ENCODE measurements at regions of chr2 and their contacts with region 1.

Region 1: DNA sequence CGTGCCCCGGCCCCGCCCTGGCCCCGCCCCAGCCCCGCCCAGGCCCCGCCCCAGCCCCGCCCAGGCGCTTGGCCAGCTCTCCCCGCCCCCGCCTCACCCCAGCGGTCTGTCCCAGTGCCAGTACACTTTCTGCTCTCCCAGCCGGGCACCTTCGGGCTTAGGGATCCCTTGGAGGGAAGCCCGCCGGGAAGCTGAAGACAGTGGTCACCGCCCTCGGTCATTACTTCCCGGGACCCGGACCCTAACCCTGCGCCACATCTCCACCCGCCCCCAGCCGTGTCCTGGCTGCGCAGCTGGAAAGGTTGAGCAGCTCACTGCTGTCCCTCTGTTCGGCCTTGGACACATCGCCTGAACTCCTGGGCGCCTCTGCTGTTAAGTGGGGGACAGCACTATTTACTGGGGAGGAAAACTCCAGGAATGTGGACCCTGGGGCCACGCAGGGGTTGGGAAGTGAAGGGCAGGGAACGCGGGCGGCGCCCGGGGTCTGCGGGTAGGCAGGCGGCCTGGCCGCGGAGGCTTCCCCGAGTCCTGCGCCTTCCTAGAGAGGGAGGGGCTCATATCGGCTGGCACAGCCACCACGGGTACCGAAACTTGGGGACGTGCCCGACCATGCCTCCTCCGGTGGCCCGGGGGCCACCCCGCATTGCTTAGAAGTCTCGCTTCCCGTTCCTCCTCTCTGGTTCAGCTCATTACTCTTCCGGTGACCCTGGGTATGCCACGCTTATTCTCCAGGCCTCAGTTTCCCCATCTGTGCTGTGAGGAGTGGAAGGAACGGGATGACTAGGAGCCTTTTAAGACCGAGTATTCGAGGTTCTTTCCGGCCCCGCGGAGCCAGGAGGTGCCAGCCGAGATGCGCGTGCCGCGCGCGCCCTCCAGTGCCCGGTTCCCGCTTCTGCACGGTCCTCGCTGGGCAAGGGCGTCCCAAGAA is 121.0 kb downstream of the GYPC start:
- DNase-seq: peak; percentile 63 to 93 (median 83)
- ATAC-seq: peak; percentile 86
- H3K4me3 ChIP-seq: peak overlapping the region; percentile 69 to 91
- H3K4me3 Mint-ChIP-seq: peak overlapping the region; percentile 94
- H3K27ac ChIP-seq: peak overlapping the region; percentile 33 to 54
- H3K27ac Mint-ChIP-seq: peak overlapping the region; percentile 94
- H3K4me1 ChIP-seq: peaks cover 4% of the 10 kb centered on the region
- H3K4me1 Mint-ChIP-seq: peaks cover 16% of the 10 kb centered on the region
- H3K27me3 ChIP-seq: no peaks in the 10 kb centered on the region
- H3K27me3 Mint-ChIP-seq: peaks cover 9% of the 10 kb centered on the region
- CTCF ChIP-seq: peak; percentile 95

Region 2: DNA sequence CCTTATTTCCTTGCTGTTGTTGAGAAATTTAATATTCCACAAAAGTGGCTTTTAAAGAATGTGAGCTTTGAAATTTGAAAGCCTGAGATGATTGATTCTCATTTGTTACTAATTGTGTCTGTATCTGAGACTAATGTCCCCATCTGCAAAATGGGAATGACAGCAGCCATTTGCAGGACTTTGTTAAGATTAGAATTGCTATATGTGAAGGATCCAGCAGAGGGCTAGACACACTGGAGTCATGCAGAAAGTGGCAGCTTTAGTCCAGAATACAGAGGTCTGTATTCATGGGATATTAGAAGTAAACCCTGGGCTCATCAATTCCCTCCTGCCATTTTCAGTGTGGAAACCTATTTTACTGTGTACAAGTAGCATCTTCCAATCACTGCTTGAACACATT is 417.5 kb before region 1 on chr2:
- CTCF ChIA-PET with region 1: no interaction called
- POLR2A ChIA-PET with region 1: no interaction called
- intact Hi-C with region 1: loop called in 1 of 2 experiments (anchors 1 kb)
- DNase-seq: peak in 2 of 9 experiments; percentile 11 to 27
- ATAC-seq: peak; percentile 42
- H3K4me3 ChIP-seq: no peak overlapping the region
- H3K4me3 Mint-ChIP-seq: no peak overlapping the region
- H3K27ac ChIP-seq: no peak overlapping the region
- H3K27ac Mint-ChIP-seq: no peak overlapping the region
- H3K4me1 ChIP-seq: no peaks in the 10 kb centered on the region
- H3K4me1 Mint-ChIP-seq: no peaks in the 10 kb centered on the region
- H3K27me3 ChIP-seq: no peaks in the 10 kb centered on the region
- H3K27me3 Mint-ChIP-seq: peaks cover 14% of the 10 kb centered on the region
- CTCF ChIP-seq: no peak

Region 3: DNA sequence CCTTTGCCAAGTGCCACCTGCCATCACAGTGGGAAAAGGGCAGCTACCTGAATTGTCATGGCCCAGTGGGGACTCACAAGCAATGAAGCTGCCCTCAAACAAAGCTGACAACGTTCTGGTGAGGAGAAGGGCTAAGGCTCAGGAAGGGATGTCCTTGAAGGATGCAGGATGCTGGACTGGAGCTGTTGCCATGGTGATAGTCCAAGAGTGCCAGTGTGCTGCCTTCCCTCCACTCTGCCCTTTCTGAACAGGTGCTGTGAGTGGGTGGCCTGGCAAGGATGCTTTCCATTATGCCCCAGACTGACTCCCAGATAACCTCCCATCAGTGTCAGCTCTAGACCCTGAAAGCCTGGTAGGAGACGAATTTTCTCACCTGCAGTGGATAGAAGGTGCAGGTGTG is 258.8 kb before region 1 on chr2:
- CTCF ChIA-PET with region 1: interaction called, 10 read pairs
- POLR2A ChIA-PET with region 1: no interaction called
- intact Hi-C with region 1: no loop called
- DNase-seq: no peak
- ATAC-seq: no peak
- H3K4me3 ChIP-seq: no peak overlapping the region
- H3K4me3 Mint-ChIP-seq: no peak overlapping the region
- H3K27ac ChIP-seq: no peak overlapping the region
- H3K27ac Mint-ChIP-seq: no peak overlapping the region
- H3K4me1 ChIP-seq: no peaks in the 10 kb centered on the region
- H3K4me1 Mint-ChIP-seq: no peaks in the 10 kb centered on the region
- H3K27me3 ChIP-seq: no peaks in the 10 kb centered on the region
- H3K27me3 Mint-ChIP-seq: peaks cover 3% of the 10 kb centered on the region
- CTCF ChIP-seq: no peak

Region 4: DNA sequence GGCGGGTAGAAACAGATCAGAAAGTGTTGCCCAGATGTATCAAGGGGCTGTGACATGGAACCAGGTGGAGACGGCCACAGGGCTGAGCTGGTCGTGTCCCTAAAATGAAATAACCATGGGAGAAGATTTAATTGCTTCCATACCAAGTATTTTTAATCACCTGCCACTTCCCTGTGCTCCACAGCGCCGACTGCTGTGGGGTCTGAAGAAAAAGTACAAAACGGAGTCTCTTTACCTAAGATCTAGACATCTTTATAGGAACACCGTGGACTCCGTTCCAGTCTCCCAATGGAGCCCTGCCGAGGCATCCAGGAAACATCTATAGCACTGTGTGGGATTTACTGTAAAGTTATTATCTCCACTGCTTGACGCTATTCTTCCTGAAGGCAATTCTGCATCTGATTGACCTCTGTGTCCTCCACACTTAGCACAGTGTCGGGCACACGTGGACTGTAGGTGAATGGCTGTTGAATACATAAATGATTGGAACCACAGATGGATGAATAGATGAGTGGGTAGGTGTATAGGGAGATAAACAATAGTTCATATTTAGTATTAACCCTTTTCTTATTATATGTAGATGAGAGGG is 142.6 kb before region 1 on chr2:
- CTCF ChIA-PET with region 1: interaction called, 15 read pairs
- POLR2A ChIA-PET with region 1: no interaction called
- intact Hi-C with region 1: loop called in 1 of 2 experiments (anchors 1 kb)
- DNase-seq: peak in 7 of 9 experiments; percentile 14 to 67 (median 41)
- ATAC-seq: peak; percentile 48
- H3K4me3 ChIP-seq: no peak overlapping the region
- H3K4me3 Mint-ChIP-seq: no peak overlapping the region
- H3K27ac ChIP-seq: no peak overlapping the region
- H3K27ac Mint-ChIP-seq: no peak overlapping the region
- H3K4me1 ChIP-seq: no peaks in the 10 kb centered on the region
- H3K4me1 Mint-ChIP-seq: peaks cover 5% of the 10 kb centered on the region
- H3K27me3 ChIP-seq: no peaks in the 10 kb centered on the region
- H3K27me3 Mint-ChIP-seq: no peaks in the 10 kb centered on the region
- CTCF ChIP-seq: peak; percentile 51

Region 5: DNA sequence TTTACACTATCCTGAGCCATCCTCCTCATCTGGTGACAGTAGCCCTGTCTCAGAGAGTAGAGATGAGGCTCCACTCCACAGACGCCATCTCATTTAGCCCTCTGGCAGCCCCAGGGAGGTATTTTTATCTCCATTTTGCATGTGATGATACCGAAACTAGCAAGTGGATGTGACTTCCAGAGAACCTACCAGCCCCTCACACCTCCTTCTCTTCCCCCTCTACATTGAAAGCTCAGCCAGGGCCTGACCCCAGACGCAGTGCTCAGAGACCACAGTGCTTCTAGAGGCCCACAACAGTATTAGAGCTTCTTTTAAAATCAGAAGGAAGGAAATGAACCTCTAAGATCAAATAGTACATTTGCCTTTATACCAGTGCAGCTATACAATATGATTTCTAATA is 112.7 kb before region 1 on chr2:
- CTCF ChIA-PET with region 1: interaction called, 18 read pairs
- POLR2A ChIA-PET with region 1: interaction called, 4 read pairs
- intact Hi-C with region 1: loop called in 1 of 2 experiments (anchors 5 kb)
- DNase-seq: peak in 7 of 9 experiments; percentile 15 to 76 (median 49)
- ATAC-seq: peak; percentile 80
- H3K4me3 ChIP-seq: peak overlapping the region; percentile 2 to 17
- H3K4me3 Mint-ChIP-seq: peak overlapping the region; percentile 59
- H3K27ac ChIP-seq: peak overlapping the region; percentile 56 to 83
- H3K27ac Mint-ChIP-seq: peak overlapping the region; percentile 96
- H3K4me1 ChIP-seq: peaks cover 89% of the 10 kb centered on the region
- H3K4me1 Mint-ChIP-seq: peaks cover 97% of the 10 kb centered on the region
- H3K27me3 ChIP-seq: no peaks in the 10 kb centered on the region
- H3K27me3 Mint-ChIP-seq: no peaks in the 10 kb centered on the region
- CTCF ChIP-seq: no peak

Region 6: DNA sequence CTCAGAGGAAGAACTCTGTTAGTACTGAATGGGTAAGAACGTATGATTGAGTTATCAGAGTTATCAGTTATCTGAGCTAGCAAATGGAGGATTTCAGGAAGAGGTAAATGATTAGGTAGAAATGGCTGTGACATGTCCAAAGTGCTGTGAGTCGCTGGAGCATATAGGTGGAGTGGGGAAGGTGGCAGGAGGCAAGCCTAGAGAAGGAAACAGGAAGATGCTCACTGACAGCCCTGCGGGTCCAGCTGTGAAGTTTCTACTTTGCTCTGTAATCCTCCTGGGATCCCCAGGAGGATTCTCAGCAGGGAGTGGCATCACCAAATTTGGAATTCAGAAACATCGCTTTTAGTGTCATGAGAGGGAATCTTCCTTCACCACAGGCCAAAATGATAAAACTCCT is 69.0 kb before region 1 on chr2:
- CTCF ChIA-PET with region 1: interaction called, 12 read pairs
- POLR2A ChIA-PET with region 1: no interaction called
- intact Hi-C with region 1: no loop called
- DNase-seq: no peak
- ATAC-seq: no peak
- H3K4me3 ChIP-seq: no peak overlapping the region
- H3K4me3 Mint-ChIP-seq: no peak overlapping the region
- H3K27ac ChIP-seq: no peak overlapping the region
- H3K27ac Mint-ChIP-seq: no peak overlapping the region
- H3K4me1 ChIP-seq: no peaks in the 10 kb centered on the region
- H3K4me1 Mint-ChIP-seq: peaks cover under 1% of the 10 kb centered on the region
- H3K27me3 ChIP-seq: no peaks in the 10 kb centered on the region
- H3K27me3 Mint-ChIP-seq: no peaks in the 10 kb centered on the region
- CTCF ChIP-seq: no peak

Region 7: GRCh38 chr2:126971481-126972278 is 194.7 kb after region 1 on chr2:
- CTCF ChIA-PET with region 1: interaction called, 9 read pairs
- POLR2A ChIA-PET with region 1: no interaction called
- intact Hi-C with region 1: loop called (anchors 5 kb)
- DNase-seq: peak; percentile 38 to 78 (median 66)
- ATAC-seq: peak; percentile 95
- H3K4me3 ChIP-seq: peak overlapping the region; percentile 32 to 49
- H3K4me3 Mint-ChIP-seq: peak overlapping the region; percentile 76
- H3K27ac ChIP-seq: no peak overlapping the region
- H3K27ac Mint-ChIP-seq: no peak overlapping the region
- H3K4me1 ChIP-seq: peaks cover 12% of the 10 kb centered on the region
- H3K4me1 Mint-ChIP-seq: peaks cover 4% of the 10 kb centered on the region
- H3K27me3 ChIP-seq: peaks cover 0 to 4% of the 10 kb centered on the region in 2 experiments
- H3K27me3 Mint-ChIP-seq: peaks cover 39% of the 10 kb centered on the region
- CTCF ChIP-seq: peak; percentile 92

Measured in CD8-positive, alpha-beta T cell (primary cell).